ENCODE measurements at regions of chr6 and their contacts with region 1.

Region 1: GRCh38 chr6:108896111-108896661 is 48.0 kb downstream of the ARMC2 start:
- DNase-seq: no peak
- ATAC-seq: peak; percentile 83
- H3K4me3 ChIP-seq: no peak overlapping the region
- H3K4me3 Mint-ChIP-seq: peak overlapping the region in 2 of 10 donors; percentile 48 to 76
- H3K27ac ChIP-seq: no peak overlapping the region
- H3K27ac Mint-ChIP-seq: peak overlapping the region in 2 of 9 donors; percentile 16 to 88
- H3K4me1 ChIP-seq: peaks cover 0 to 44% of the 10 kb centered on the region in 2 donors
- H3K4me1 Mint-ChIP-seq: peaks cover 11 to 37% (median 16%) of the 10 kb centered on the region in 7 donors
- H3K27me3 ChIP-seq: no peaks in the 10 kb centered on the region
- H3K27me3 Mint-ChIP-seq: peaks cover 0 to 20% (median 0%) of the 10 kb centered on the region in 5 donors

Region 2: GRCh38 chr6:107786709-107787588 is 1109.2 kb before region 1 on chr6:
- CTCF ChIA-PET with region 1: no interaction called
- POLR2A ChIA-PET with region 1: no interaction called
- intact Hi-C with region 1: no loop called
- DNase-seq: peak in 7 of 9 donors; percentile 51 to 80 (median 65)
- ATAC-seq: peak; percentile 87
- H3K4me3 ChIP-seq: peak overlapping the region; percentile 34
- H3K4me3 Mint-ChIP-seq: peak overlapping the region; percentile 74 to 88 (median 82)
- H3K27ac ChIP-seq: peak overlapping the region; percentile 70
- H3K27ac Mint-ChIP-seq: peak overlapping the region; percentile 83 to 97 (median 95)
- H3K4me1 ChIP-seq: peaks cover 51 to 78% of the 10 kb centered on the region in 2 donors
- H3K4me1 Mint-ChIP-seq: peaks cover 65 to 92% (median 90%) of the 10 kb centered on the region in 7 donors
- H3K27me3 ChIP-seq: no peaks in the 10 kb centered on the region
- H3K27me3 Mint-ChIP-seq: peaks cover 0 to 6% (median 0%) of the 10 kb centered on the region in 5 donors

Region 3: GRCh38 chr6:108558372-108559096 is 337.7 kb before region 1 on chr6:
- CTCF ChIA-PET with region 1: no interaction called
- POLR2A ChIA-PET with region 1: interaction called, 3 read pairs
- intact Hi-C with region 1: loop called in 1 of 2 experiments (anchors 5 kb)
- DNase-seq: peak; percentile 91 to 98 (median 97)
- ATAC-seq: peak; percentile 75
- H3K4me3 ChIP-seq: peak overlapping the region; percentile 75
- H3K4me3 Mint-ChIP-seq: peak overlapping the region; percentile 88 to 98 (median 97)
- H3K27ac ChIP-seq: peak overlapping the region; percentile 100
- H3K27ac Mint-ChIP-seq: peak overlapping the region; percentile 87 to 99 (median 97)
- H3K4me1 ChIP-seq: peaks cover 12 to 13% of the 10 kb centered on the region in 2 donors
- H3K4me1 Mint-ChIP-seq: peaks cover 16 to 28% (median 20%) of the 10 kb centered on the region in 7 donors
- H3K27me3 ChIP-seq: no peaks in the 10 kb centered on the region
- H3K27me3 Mint-ChIP-seq: peaks cover 0 to 55% (median 6%) of the 10 kb centered on the region in 5 donors

Region 4: DNA sequence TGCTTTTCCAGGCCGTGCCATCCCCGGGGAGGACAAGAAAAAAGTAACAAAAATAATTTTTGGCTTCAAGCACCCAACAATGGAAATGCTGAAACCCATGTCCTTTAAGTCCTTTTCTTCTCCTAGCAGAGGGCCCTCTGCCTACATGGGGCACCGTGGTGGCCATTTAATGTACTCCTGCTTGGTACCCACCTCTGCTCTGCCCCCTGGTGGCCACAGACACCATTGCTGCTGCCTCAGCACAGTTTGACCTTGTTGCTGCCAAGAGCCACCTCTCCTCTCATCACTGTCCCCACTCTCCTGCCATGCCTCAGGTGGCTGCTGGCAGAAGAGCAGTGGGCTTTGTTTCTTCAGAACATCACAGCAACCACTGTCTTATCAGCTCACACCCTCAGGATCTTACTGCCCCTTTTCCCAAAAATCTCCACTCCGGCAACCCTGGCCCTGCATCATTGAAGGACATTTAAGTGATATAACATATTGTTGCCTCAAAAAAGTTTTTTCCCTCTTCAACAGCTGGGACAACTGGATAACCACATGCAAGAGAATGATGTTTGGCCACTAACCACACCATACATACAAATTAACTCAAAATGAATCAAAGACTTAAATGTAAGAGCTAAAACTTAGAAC is 60.9 kb before region 1 on chr6:
- CTCF ChIA-PET with region 1: no interaction called
- POLR2A ChIA-PET with region 1: no interaction called
- intact Hi-C with region 1: loop called in 1 of 2 experiments (anchors 1 kb)
- DNase-seq: peak; percentile 65 to 82 (median 76)
- ATAC-seq: peak; percentile 98
- H3K4me3 ChIP-seq: no peak overlapping the region
- H3K4me3 Mint-ChIP-seq: no peak overlapping the region
- H3K27ac ChIP-seq: no peak overlapping the region
- H3K27ac Mint-ChIP-seq: peak overlapping the region in 6 of 9 donors; percentile 27 to 52 (median 48)
- H3K4me1 ChIP-seq: peaks cover 9 to 18% of the 10 kb centered on the region in 2 donors
- H3K4me1 Mint-ChIP-seq: peaks cover 14 to 30% (median 22%) of the 10 kb centered on the region in 7 donors
- H3K27me3 ChIP-seq: no peaks in the 10 kb centered on the region
- H3K27me3 Mint-ChIP-seq: peaks cover 0 to 44% (median 0%) of the 10 kb centered on the region in 5 donors

Region 5: GRCh38 chr6:108866798-108867197 is 29.4 kb before region 1 on chr6:
- CTCF ChIA-PET with region 1: no interaction called
- POLR2A ChIA-PET with region 1: no interaction called
- intact Hi-C with region 1: loop called in 1 of 2 experiments (anchors 1 kb)
- DNase-seq: no peak
- ATAC-seq: no peak
- H3K4me3 ChIP-seq: no peak overlapping the region
- H3K4me3 Mint-ChIP-seq: no peak overlapping the region
- H3K27ac ChIP-seq: no peak overlapping the region
- H3K27ac Mint-ChIP-seq: no peak overlapping the region
- H3K4me1 ChIP-seq: peaks cover 0 to 12% of the 10 kb centered on the region in 2 donors
- H3K4me1 Mint-ChIP-seq: peaks cover 3 to 44% (median 14%) of the 10 kb centered on the region in 7 donors
- H3K27me3 ChIP-seq: no peaks in the 10 kb centered on the region
- H3K27me3 Mint-ChIP-seq: peaks cover 0 to 7% (median 0%) of the 10 kb centered on the region in 5 donors

Region 6: GRCh38 chr6:108883172-108883571 is 13.0 kb before region 1 on chr6:
- CTCF ChIA-PET with region 1: no interaction called
- POLR2A ChIA-PET with region 1: no interaction called
- intact Hi-C with region 1: loop called in 1 of 2 experiments (anchors 1 kb)
- DNase-seq: no peak
- ATAC-seq: no peak
- H3K4me3 ChIP-seq: no peak overlapping the region
- H3K4me3 Mint-ChIP-seq: peak overlapping the region in 1 of 10 donors; percentile 24
- H3K27ac ChIP-seq: no peak overlapping the region
- H3K27ac Mint-ChIP-seq: peak overlapping the region in 1 of 9 donors; percentile 67
- H3K4me1 ChIP-seq: no peaks in the 10 kb centered on the region
- H3K4me1 Mint-ChIP-seq: peaks cover 0 to 39% (median 5%) of the 10 kb centered on the region in 7 donors
- H3K27me3 ChIP-seq: no peaks in the 10 kb centered on the region
- H3K27me3 Mint-ChIP-seq: peaks cover 0 to 42% (median 0%) of the 10 kb centered on the region in 5 donors

Region 7: GRCh38 chr6:108944707-108945680 is 48.8 kb after region 1 on chr6:
- CTCF ChIA-PET with region 1: no interaction called
- POLR2A ChIA-PET with region 1: no interaction called
- intact Hi-C with region 1: loop called (anchors 1 to 5 kb)
- DNase-seq: no peak
- ATAC-seq: no peak
- H3K4me3 ChIP-seq: no peak overlapping the region
- H3K4me3 Mint-ChIP-seq: peak overlapping the region in 1 of 10 donors; percentile 17
- H3K27ac ChIP-seq: no peak overlapping the region
- H3K27ac Mint-ChIP-seq: peak overlapping the region in 6 of 9 donors; percentile 5 to 75 (median 66)
- H3K4me1 ChIP-seq: peaks cover 28 to 38% of the 10 kb centered on the region in 2 donors
- H3K4me1 Mint-ChIP-seq: peaks cover 22 to 82% (median 73%) of the 10 kb centered on the region in 7 donors
- H3K27me3 ChIP-seq: no peaks in the 10 kb centered on the region
- H3K27me3 Mint-ChIP-seq: peaks cover 0 to 5% (median 0%) of the 10 kb centered on the region in 5 donors

Region 8: DNA sequence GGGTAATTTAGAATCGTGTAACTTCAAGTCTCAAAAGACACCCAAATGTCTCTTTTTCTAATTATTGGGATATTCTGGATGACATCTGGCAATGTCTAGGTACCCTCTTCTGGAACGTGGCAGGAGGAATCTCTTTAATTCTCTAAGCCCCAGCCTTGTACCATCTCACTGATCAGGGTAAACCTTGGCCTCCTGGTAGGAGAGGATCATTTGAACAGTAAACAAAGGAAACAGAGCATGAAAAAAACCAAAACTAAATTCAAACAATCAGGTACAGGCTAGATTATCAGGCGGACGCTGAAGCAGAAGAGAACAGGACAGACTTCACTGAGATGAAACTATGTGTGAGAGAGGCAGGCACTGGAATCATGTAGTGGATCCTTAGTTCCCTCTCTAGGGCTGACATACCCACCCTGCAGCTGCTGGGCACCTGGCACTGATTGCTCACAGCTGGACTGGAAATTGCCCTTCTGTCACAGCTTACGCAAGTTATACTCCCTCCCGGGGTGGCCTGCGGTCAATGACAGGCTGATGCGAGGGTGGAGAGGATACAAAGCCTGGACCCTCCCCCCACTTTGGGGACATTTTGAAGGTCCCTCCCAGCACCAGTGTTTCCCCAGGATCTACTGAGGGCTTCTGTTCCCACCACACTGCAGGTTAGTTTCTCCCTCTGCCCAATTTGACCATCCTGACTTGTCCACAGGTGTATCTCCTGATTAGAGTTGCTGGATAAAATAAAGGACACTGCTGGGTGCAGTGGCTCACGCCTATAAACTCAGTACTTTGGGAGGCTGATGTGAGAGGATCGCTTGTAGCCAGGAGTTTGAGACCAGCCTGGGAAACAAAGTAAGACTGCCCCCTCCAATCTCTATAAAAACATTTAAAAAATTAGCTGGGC is 607.4 kb after region 1 on chr6:
- CTCF ChIA-PET with region 1: no interaction called
- POLR2A ChIA-PET with region 1: no interaction called
- intact Hi-C with region 1: no loop called
- DNase-seq: no peak
- ATAC-seq: no peak
- H3K4me3 ChIP-seq: no peak overlapping the region
- H3K4me3 Mint-ChIP-seq: no peak overlapping the region
- H3K27ac ChIP-seq: no peak overlapping the region
- H3K27ac Mint-ChIP-seq: no peak overlapping the region
- H3K4me1 ChIP-seq: no peaks in the 10 kb centered on the region
- H3K4me1 Mint-ChIP-seq: peaks cover 0 to 8% (median 5%) of the 10 kb centered on the region in 7 donors
- H3K27me3 ChIP-seq: no peaks in the 10 kb centered on the region
- H3K27me3 Mint-ChIP-seq: peaks cover 0 to 24% (median 0%) of the 10 kb centered on the region in 5 donors

Measured in naive thymus-derived CD4-positive, alpha-beta T cell (primary cell).